Prostate gland (tissue), 2 donors: ENCODE measurements at regions of chr5 and their contacts with region 1.

Region 1: GRCh38 chr5:53481887-53482716 is 1.7 kb downstream of the FST start:
- DNase-seq: peak; percentile 57
- H3K4me3 ChIP-seq: peak overlapping the region; percentile 37 to 42
- H3K27ac ChIP-seq: peak overlapping the region; percentile 60 to 63
- H3K4me1 ChIP-seq: no peaks in the 10 kb centered on the region
- H3K27me3 ChIP-seq: no peaks in the 10 kb centered on the region
- CTCF ChIP-seq: peak in 2 of 4 experiments; percentile 38 to 44
- POLR2A ChIP-seq: no peak

Region 2: GRCh38 chr5:53170748-53171349 is 311.3 kb before region 1 on chr5:
- intact Hi-C with region 1: loop called (anchors 10 kb)
- DNase-seq: no peak
- H3K4me3 ChIP-seq: no peak overlapping the region
- H3K27ac ChIP-seq: no peak overlapping the region
- H3K4me1 ChIP-seq: no peaks in the 10 kb centered on the region
- H3K27me3 ChIP-seq: no peaks in the 10 kb centered on the region
- CTCF ChIP-seq: peak in 3 of 4 experiments; percentile 27 to 57 (median 51)
- POLR2A ChIP-seq: no peak

Region 3: GRCh38 chr5:53430261-53431252 is 51.5 kb before region 1 on chr5:
- intact Hi-C with region 1: no loop called
- DNase-seq: no peak
- H3K4me3 ChIP-seq: no peak overlapping the region
- H3K27ac ChIP-seq: no peak overlapping the region
- H3K4me1 ChIP-seq: no peaks in the 10 kb centered on the region
- H3K27me3 ChIP-seq: no peaks in the 10 kb centered on the region
- CTCF ChIP-seq: peak in 3 of 4 experiments; percentile 9 to 41 (median 36)
- POLR2A ChIP-seq: no peak

Region 4: DNA sequence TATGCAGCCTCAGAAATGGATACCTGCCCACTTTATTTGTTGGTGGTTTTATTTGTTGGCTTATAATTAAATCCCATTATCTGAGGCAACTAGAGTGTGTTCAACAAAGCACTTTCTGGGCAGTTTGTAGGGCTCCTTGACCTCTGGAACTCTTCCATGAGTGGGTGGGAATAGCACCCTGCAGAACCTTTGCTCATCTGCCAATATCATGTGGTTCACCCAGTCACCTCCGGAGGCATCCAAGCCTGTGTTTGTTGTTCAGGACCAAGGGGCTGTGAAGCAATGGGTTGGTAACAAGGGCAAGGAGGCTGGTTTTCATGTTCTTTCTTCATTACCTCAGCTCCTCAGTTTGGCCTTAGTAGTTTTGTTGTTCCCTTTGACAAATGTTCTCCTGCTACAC is 392.3 kb after region 1 on chr5:
- intact Hi-C with region 1: loop called (anchors 5 kb)
- DNase-seq: no peak
- H3K4me3 ChIP-seq: no peak overlapping the region
- H3K27ac ChIP-seq: no peak overlapping the region
- H3K4me1 ChIP-seq: no peaks in the 10 kb centered on the region
- H3K27me3 ChIP-seq: no peaks in the 10 kb centered on the region
- CTCF ChIP-seq: no peak
- POLR2A ChIP-seq: no peak

Region 5: DNA sequence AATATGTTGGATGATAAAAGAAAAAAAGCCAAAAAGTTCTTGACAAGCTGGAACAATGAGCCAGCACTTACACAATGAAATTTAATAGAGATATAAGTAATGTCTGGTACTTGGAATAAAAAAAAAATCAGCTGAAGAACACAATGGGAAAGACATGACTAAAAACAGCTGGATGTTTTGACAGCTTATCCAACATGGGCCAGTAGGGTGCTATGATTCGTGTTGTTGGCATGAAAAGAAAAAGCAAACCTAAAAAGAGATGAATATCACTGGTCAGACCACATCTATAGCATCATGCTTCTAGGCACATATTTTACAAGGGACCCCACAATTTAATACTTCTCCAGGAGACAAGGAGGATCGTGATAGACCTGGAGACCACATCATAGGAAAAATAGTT is 652.9 kb after region 1 on chr5:
- intact Hi-C with region 1: loop called (anchors 10 kb)
- DNase-seq: no peak
- H3K4me3 ChIP-seq: no peak overlapping the region
- H3K27ac ChIP-seq: no peak overlapping the region
- H3K4me1 ChIP-seq: no peaks in the 10 kb centered on the region
- H3K27me3 ChIP-seq: no peaks in the 10 kb centered on the region
- CTCF ChIP-seq: no peak
- POLR2A ChIP-seq: no peak

Region 6: DNA sequence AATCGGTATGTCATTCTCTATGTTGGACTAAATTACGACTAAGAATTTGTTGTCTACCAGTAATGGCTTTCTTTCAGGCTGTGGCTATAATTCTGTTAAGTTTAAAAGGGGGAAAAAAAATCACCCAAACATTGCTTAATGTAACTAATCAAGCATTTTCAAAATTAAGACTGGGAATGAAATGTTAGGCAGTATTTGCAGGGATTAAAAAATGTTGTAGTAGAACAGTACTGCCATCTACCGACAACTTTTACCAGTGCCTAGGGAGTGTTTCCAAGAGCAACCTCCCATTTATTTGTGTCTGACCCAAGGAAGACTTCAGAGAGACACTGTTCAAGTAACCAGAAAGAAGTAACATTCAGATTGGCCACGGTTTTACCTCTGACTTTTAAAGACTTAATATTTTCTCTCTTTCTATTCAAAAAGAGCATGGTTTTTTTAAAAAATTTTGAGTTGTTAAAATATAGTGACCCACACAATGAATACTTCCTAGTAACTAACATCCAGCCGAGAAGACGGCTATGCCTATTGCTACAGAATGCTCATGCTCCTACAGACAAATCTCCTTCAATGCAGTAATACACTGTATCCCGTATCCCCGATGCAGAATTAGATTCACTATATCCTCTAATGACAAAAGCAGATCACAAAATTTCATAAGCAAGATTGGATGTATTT is 735.9 kb after region 1 on chr5:
- intact Hi-C with region 1: loop called (anchors 2 kb)
- DNase-seq: peak; percentile 42
- H3K4me3 ChIP-seq: no peak overlapping the region
- H3K27ac ChIP-seq: no peak overlapping the region
- H3K4me1 ChIP-seq: no peaks in the 10 kb centered on the region
- H3K27me3 ChIP-seq: no peaks in the 10 kb centered on the region
- CTCF ChIP-seq: peak; percentile 36 to 75 (median 75)
- POLR2A ChIP-seq: no peak

Region 7: DNA sequence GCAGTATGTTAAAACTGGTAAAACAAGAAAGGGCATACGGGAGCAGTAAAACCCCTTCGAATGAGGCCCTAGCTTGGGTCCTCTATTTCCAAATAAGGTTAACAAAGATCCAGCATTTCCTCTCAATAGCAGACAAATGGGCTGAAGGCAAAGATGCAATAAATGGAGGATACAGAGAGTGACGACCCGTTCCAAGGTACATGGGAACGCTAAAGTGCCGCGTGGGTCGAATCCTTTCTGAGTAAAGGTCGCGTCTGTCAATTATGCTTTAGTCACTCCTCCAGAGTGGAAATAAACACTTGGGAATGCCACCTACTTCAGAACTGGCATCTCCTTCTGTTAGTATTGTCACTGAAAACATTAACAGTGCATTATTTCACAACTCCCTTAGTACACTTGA is 803.6 kb after region 1 on chr5:
- intact Hi-C with region 1: no loop called
- DNase-seq: no peak
- H3K4me3 ChIP-seq: no peak overlapping the region
- H3K27ac ChIP-seq: no peak overlapping the region
- H3K4me1 ChIP-seq: no peaks in the 10 kb centered on the region
- H3K27me3 ChIP-seq: no peaks in the 10 kb centered on the region
- CTCF ChIP-seq: no peak
- POLR2A ChIP-seq: no peak